HAP-1 (cell line): ENCODE measurements at regions of chr13 and their contacts with region 1.

Region 1: GRCh38 chr13:106917673-106918556 is 350.0 kb upstream of the ARGLU1 start:
- DNase-seq: peak; percentile 58 to 83
- H3K4me3 ChIP-seq: peak overlapping the region; percentile 30
- H3K4me1 ChIP-seq: peaks cover 13% of the 10 kb centered on the region; the same call in 1 of the 2 replicates
- H3K27me3 ChIP-seq: no peaks in the 10 kb centered on the region

Region 2: GRCh38 chr13:106567474-106568298 is 350.2 kb before region 1 on chr13 and contains the start of gene ARGLU1:
- in situ Hi-C with region 1: loop called (anchors 25 kb)
- DNase-seq: peak; percentile 80 to 94
- H3K4me3 ChIP-seq: peak within 1 kb of the TSS; percentile 94
- H3K4me1 ChIP-seq: peaks cover 27% of the 10 kb centered on the region
- H3K27me3 ChIP-seq: no peaks in the 10 kb centered on the region

Region 3: GRCh38 chr13:106587787-106588186 is 330.1 kb before region 1 on chr13:
- in situ Hi-C with region 1: no loop called
- DNase-seq: no peak
- H3K4me3 ChIP-seq: no peak overlapping the region
- H3K4me1 ChIP-seq: no peaks in the 10 kb centered on the region
- H3K27me3 ChIP-seq: no peaks in the 10 kb centered on the region

Region 4: DNA sequence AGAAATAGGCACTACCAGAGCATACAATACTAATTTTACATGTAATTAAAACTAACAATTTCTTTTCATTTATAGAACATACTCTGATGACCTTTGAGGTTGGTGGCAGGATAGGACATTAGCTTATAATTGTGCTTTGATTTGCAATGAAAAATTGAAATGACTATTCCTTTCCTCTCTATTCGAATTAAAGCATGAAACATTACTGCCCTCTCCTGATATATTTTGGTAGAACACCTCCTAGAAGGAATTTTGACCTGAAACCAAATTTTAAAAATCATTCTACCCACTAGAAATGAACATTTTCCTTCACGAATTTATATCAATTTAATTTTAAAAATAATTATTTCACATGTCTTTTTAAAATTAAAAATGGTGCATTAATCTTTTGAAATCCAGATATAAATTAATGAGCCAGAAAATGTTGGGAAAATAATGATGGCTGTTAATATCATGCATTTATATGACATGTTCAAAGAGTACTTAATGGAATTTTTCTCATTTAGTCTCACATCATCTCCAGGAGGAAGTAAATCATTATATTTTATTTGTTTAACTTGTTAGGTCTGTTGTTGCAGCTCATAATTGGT is 206.3 kb after region 1 on chr13:
- in situ Hi-C with region 1: no loop called
- DNase-seq: peak in 1 of 2 experiments; percentile 13
- H3K4me3 ChIP-seq: no peak overlapping the region
- H3K4me1 ChIP-seq: no peaks in the 10 kb centered on the region
- H3K27me3 ChIP-seq: peaks cover 4% of the 10 kb centered on the region; the same call in 1 of the 2 replicates